ENCODE measurements at regions of chr6 and their contacts with region 1.

Region 1: DNA sequence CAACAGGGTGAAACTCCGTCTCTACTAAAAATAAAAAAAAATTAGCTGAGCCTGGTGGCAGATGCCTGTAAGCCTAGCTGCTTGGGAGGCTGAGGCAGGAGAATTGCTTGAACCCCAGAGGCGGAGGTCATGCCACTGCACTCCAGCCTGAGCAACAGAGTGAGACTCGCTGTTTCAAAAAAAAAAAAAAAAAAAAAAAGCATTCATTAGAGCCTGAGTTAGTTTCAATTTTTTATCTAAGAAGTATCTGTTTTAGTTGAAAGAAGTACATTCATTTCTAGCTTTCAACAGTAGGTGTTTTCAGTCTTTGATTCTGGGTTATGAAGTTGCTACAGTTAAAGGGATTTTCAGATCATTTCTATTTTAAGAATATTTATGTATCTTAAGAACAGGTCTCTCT is 42.2 kb downstream of the ZNF292 start:
- DNase-seq: no peak
- H3K4me3 Mint-ChIP-seq: no peak overlapping the region
- H3K27ac Mint-ChIP-seq: peak overlapping the region; percentile 28
- H3K4me1 Mint-ChIP-seq: peaks cover 58% of the 10 kb centered on the region
- H3K27me3 Mint-ChIP-seq: no peaks in the 10 kb centered on the region

Region 2: GRCh38 chr6:87182321-87182720 is 15.2 kb before region 1 on chr6:
- intact Hi-C with region 1: loop called (anchors 1 kb)
- DNase-seq: no peak
- H3K4me3 Mint-ChIP-seq: peak overlapping the region; percentile 33
- H3K27ac Mint-ChIP-seq: peak overlapping the region; percentile 89
- H3K4me1 Mint-ChIP-seq: peaks cover 55% of the 10 kb centered on the region
- H3K27me3 Mint-ChIP-seq: no peaks in the 10 kb centered on the region

Region 3: DNA sequence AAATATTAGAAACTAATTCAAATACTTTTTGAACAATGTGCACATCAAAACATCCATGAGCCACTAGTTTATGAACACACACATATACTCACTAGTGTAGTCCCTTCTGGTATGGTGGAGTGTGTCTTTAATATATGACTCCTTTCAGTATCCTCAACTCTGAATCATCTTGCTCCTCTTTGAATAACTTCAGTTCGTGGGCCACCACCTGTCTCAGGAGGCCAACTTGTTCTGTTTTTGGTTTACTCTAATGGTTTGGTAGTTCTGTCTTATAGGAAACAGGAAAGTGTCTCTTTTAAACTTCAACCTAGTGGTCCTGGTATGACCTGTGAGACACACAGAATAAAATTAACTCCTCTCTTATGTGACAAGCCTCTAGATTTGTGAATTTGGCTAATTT is 13.4 kb after region 1 on chr6:
- intact Hi-C with region 1: loop called (anchors 2 kb)
- DNase-seq: no peak
- H3K4me3 Mint-ChIP-seq: no peak overlapping the region
- H3K27ac Mint-ChIP-seq: peak overlapping the region; percentile 58
- H3K4me1 Mint-ChIP-seq: peaks cover 51% of the 10 kb centered on the region
- H3K27me3 Mint-ChIP-seq: no peaks in the 10 kb centered on the region

Region 4: DNA sequence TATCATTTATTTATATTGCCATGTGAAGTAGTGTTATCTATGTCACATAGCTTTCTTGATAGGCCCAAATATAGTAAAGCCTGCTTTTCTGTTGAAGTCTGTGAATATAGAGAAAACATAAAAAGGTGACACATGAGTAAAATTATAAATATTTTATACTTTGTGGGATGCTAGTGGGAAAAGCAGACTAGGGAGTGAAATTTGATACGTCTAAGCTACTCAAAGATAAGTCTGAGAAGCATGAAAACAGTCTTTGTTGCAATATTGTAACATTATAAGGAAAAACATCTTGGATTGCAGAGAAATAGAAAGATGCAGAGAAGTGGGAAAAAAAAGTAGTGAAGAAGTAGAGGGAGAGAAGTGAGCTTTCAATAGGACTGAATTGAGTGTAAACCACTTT is 33.3 kb after region 1 on chr6:
- intact Hi-C with region 1: loop called (anchors 5 kb)
- DNase-seq: no peak
- H3K4me3 Mint-ChIP-seq: no peak overlapping the region
- H3K27ac Mint-ChIP-seq: no peak overlapping the region
- H3K4me1 Mint-ChIP-seq: peaks cover 13% of the 10 kb centered on the region
- H3K27me3 Mint-ChIP-seq: no peaks in the 10 kb centered on the region

Region 5: DNA sequence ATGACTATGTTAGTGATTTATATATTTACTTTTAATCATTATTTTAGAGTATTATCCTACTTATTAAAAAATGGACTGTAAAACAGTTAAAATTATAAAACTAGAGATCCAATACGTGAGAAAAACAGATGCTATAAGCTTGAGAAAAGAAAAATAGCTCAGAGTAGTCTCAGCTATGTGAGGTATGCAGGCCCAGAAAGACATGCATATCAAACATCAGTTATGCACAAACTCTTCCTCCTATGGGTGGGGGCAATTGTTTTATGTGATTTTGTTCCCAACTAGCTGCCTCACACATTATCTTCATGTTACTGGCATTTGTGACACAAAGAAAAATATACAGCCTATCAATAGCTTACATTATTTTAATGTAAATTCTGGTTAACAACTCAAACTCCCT is 363.5 kb after region 1 on chr6:
- intact Hi-C with region 1: no loop called
- DNase-seq: no peak
- H3K4me3 Mint-ChIP-seq: no peak overlapping the region
- H3K27ac Mint-ChIP-seq: no peak overlapping the region
- H3K4me1 Mint-ChIP-seq: peaks cover 2% of the 10 kb centered on the region
- H3K27me3 Mint-ChIP-seq: no peaks in the 10 kb centered on the region

Measured in activated T-helper 2 cell treated with anti-CD3 and anti-CD28 coated beads, Interferon-gamma antibody, Interleukin-2, Interleukin-4, amounts not matched to agents 10 μg/mL and 5 μg/mL and 100 μg/mL, durations not matched to agents 14 hours and 24 hours and 36 hours (primary cell).